A549 (cell line): ENCODE measurements at regions of chr3 and their contacts with region 1.

Region 1: DNA sequence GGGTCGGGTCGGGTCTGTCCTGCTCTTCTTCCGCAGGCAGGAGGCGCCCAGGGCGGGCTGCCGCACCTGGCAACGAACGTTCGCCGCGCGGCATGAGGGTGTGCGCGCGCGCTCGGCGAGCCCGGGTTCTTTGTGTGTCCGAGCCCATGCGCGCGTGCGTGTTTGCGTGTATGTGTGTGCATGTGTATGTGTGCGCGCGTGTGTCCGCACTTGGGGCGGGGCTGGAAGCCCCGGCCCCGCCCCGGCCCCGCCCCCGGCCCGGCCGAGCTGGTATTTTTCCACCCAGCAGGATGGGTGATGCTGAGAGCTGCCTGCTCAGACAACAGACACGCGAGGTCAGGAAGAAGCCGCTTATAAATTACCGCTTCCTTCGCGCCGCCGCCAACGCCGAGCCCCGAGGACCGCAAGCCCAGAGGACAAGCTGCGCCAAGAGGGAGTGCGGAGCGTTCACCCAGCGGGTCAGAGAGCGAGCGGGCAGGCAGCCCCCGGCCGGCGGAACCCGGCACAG is at the start of gene SLC6A6:
- DNase-seq: peak; percentile 91 to 97
- ATAC-seq: peak; percentile 62 to 83
- H3K4me3 ChIP-seq: peak within 1 kb of the TSS; percentile 75
- H3K27ac ChIP-seq: peak within 1 kb of the TSS; percentile 92 to 98
- H3K4me1 ChIP-seq: peaks cover 33% of the 10 kb centered on the region
- CTCF ChIP-seq: no peak; the same call in 2 of the 3 replicates
- EP300 ChIP-seq: no peak
- POLR2A ChIP-seq: peak; percentile 88
- RAD21 ChIP-seq: peak; percentile 27 to 60; a peak in 4 of 5 replicates
- polyA plus RNA-seq, gene SLC6A6: 73.3 and 76.2 TPM in 2 replicates

Region 2: DNA sequence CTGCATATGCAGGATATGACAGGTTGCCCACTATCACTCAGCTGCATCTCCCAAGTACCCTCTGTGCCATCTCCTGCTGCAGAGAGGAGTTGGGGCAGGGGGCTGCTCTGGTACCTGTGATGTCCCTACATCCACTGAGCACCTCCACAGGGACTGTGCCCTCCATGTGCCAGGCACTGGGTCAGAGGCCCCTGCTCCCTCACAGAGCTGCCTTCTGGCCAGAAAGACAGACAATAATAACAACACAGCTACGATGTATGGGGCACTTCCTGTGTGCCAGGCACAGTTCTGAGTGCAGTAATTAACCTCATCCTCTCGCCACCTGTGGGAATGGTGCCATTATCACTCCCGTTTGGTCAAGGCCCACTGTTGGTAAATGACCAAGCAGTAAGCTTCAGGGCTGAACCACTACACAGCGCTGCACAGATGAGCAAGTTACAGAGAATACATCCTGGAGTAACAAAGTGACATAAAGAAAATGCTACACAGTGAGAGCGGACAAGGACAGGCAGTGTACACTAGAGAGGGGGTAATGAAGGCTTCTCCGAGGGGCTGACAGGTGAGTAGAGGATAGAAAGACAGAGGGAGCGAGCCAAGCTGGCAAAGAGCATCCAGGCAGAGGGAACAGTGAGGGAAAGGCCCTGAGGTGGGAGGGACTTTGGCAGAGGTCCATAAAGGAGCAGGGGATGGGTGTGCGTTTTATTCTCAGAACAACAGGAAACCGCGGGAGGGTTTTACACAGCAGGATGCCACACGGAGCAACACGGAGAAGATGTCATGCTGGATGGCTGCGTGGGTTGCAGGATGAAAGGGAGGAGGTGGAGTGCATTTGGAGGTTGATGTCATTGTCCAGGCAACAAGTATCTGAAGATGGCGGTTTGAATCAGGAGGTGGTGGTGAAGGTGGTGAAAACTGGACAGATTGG is 536.1 kb before region 1 on chr3:
- CTCF ChIA-PET with region 1: no interaction called
- POLR2A ChIA-PET with region 1: no interaction called
- DNase-seq: no peak
- ATAC-seq: no peak
- H3K4me3 ChIP-seq: no peak overlapping the region
- H3K27ac ChIP-seq: no peak overlapping the region
- H3K4me1 ChIP-seq: no peaks in the 10 kb centered on the region
- CTCF ChIP-seq: no peak
- EP300 ChIP-seq: no peak
- POLR2A ChIP-seq: no peak
- RAD21 ChIP-seq: no peak

Region 3: GRCh38 chr3:14391033-14391432 is 11.3 kb before region 1 on chr3:
- CTCF ChIA-PET with region 1: interaction called, 6 read pairs
- POLR2A ChIA-PET with region 1: interaction called, 10 read pairs
- DNase-seq: peak in 1 of 2 experiments; percentile 70
- ATAC-seq: peak; percentile 73 to 86
- H3K4me3 ChIP-seq: no peak overlapping the region
- H3K27ac ChIP-seq: peak overlapping the region; percentile 18 to 32; a peak in 4 of 6 replicates
- H3K4me1 ChIP-seq: peaks cover 14% of the 10 kb centered on the region
- CTCF ChIP-seq: no peak
- EP300 ChIP-seq: no peak
- POLR2A ChIP-seq: no peak
- RAD21 ChIP-seq: no peak

Region 4: DNA sequence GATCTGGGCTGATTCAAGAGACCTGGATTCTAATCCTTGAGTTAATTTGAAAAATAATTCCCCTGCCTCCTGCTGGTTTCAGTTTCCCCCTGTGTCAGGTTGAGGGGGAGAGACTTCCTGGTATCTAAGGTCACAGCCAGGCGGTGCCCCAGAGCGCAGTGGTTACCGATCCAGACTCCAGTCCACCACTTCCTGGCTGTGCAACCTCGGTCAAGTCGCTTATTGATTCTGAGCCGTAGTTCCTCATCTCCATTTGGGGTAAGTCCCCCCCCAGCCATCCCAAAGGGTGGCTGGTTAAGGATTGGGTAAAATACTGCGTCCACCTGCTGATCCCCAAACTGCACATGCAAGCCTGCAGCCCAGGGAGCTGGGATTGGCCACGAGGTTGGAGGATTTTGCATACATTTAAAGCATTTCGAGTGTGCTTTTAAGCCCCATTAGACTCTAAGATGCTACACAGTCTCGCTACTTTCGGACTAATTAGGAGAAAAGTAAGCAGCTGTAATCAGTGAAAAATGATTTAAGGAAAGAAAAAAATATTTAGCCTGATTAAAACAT is 23.8 kb after region 1 on chr3:
- CTCF ChIA-PET with region 1: interaction called, 12 read pairs
- POLR2A ChIA-PET with region 1: interaction called, 5 read pairs
- DNase-seq: no peak
- ATAC-seq: no peak
- H3K4me3 ChIP-seq: no peak overlapping the region
- H3K27ac ChIP-seq: peak overlapping the region in 1 of 2 experiments; percentile 67; a peak in 2 of 6 replicates
- H3K4me1 ChIP-seq: peaks cover 75% of the 10 kb centered on the region
- CTCF ChIP-seq: no peak
- EP300 ChIP-seq: no peak
- POLR2A ChIP-seq: no peak
- RAD21 ChIP-seq: no peak

Region 5: GRCh38 chr3:14452679-14453367 is 50.5 kb after region 1 on chr3:
- CTCF ChIA-PET with region 1: interaction called, 6 read pairs
- POLR2A ChIA-PET with region 1: interaction called, 13 read pairs
- DNase-seq: peak; percentile 83 to 88
- ATAC-seq: peak; percentile 69 to 78
- H3K4me3 ChIP-seq: peak overlapping the region; percentile 32; the same call in 1 of the 3 replicates
- H3K27ac ChIP-seq: peak overlapping the region; percentile 90 to 97
- H3K4me1 ChIP-seq: peaks cover 59% of the 10 kb centered on the region
- CTCF ChIP-seq: no peak
- EP300 ChIP-seq: peak; percentile 4 to 59; a peak in 2 of 5 replicates
- POLR2A ChIP-seq: no peak
- RAD21 ChIP-seq: peak in 1 of 2 experiments; percentile 33; a peak in 2 of 5 replicates

Region 6: GRCh38 chr3:14461748-14462324 is 59.5 kb after region 1 on chr3:
- CTCF ChIA-PET with region 1: interaction called, 23 read pairs
- POLR2A ChIA-PET with region 1: interaction called, 4 read pairs
- DNase-seq: peak; percentile 71 to 79
- ATAC-seq: peak; percentile 75 to 82
- H3K4me3 ChIP-seq: no peak overlapping the region
- H3K27ac ChIP-seq: peak overlapping the region; percentile 21 to 61; a peak in 3 of 6 replicates
- H3K4me1 ChIP-seq: peaks cover 44% of the 10 kb centered on the region
- CTCF ChIP-seq: peak; percentile 62
- EP300 ChIP-seq: no peak
- POLR2A ChIP-seq: no peak
- RAD21 ChIP-seq: peak; percentile 82

Region 7: GRCh38 chr3:14988988-14989394 is 586.6 kb after region 1 on chr3:
- CTCF ChIA-PET with region 1: no interaction called
- POLR2A ChIA-PET with region 1: no interaction called
- DNase-seq: peak; percentile 19 to 22
- ATAC-seq: peak; percentile 57 to 65; a peak in 5 of 6 replicates
- H3K4me3 ChIP-seq: no peak overlapping the region
- H3K27ac ChIP-seq: no peak overlapping the region
- H3K4me1 ChIP-seq: peaks cover 21% of the 10 kb centered on the region
- CTCF ChIP-seq: no peak
- EP300 ChIP-seq: no peak
- POLR2A ChIP-seq: no peak
- RAD21 ChIP-seq: no peak